Vagina (tissue), 2 donors: ENCODE measurements at regions of chr21 and their contacts with region 1.

Region 1: DNA sequence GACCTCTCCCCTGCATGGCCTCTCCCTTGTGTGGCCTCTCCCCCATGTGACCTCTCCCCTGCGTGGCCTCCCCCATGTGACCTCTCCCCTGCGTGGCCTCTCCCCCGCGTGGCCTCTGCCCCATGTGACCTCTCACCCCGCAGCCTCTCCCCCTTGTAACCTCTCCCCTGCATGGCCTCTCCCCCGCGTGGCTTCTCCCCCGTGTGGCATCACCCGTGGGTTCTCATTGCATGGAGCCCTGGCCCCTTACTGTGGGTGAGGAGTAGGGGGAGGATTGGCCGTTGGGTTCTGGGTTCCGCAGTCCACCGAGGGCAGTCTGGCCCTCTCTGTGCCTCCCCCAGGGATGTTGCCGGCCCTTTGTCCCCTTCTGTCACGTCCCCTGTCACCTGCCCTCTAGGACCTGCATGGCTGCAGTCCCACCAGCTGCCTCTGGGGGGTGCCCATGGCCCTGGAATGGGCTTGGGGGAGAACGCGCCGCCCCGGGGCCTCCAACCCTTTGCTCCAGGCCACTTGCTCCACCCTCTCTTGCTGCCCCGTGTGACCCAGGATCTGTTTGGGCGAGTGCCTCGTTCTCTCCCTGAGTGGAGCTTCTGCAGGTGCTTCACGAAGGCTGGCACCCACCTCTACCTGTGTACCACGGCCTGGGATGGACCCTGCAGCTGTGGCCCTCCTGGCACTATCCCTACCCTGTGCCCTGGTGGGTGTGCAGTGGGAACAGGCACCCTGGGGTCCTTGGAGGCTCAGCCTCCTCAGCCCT is 21.3 kb downstream of the RRP1 start:
- DNase-seq: no peak
- H3K4me3 ChIP-seq: peak overlapping the region in 1 of 2 donors; percentile 27
- H3K27ac ChIP-seq: peak overlapping the region; percentile 60
- H3K4me1 ChIP-seq: peaks cover 53% of the 10 kb centered on the region
- H3K27me3 ChIP-seq: no peaks in the 10 kb centered on the region
- CTCF ChIP-seq: peak; percentile 73 to 89 (median 87)
- POLR2A ChIP-seq: no peak

Region 2: GRCh38 chr21:43975495-43975993 is 164.9 kb after region 1 on chr21:
- intact Hi-C with region 1: loop called (anchors 5 kb)
- DNase-seq: no peak
- H3K4me3 ChIP-seq: no peak overlapping the region
- H3K27ac ChIP-seq: no peak overlapping the region
- H3K4me1 ChIP-seq: no peaks in the 10 kb centered on the region
- H3K27me3 ChIP-seq: no peaks in the 10 kb centered on the region
- CTCF ChIP-seq: peak; percentile 79 to 96 (median 89)
- POLR2A ChIP-seq: no peak

Region 3: GRCh38 chr21:44454747-44455523 is 644.3 kb after region 1 on chr21 and contains the start of gene LRRC3:
- intact Hi-C with region 1: no loop called
- DNase-seq: no peak
- H3K4me3 ChIP-seq: peak within 1 kb of the TSS; percentile 75 to 83
- H3K27ac ChIP-seq: no peak within 1 kb of the TSS
- H3K4me1 ChIP-seq: peaks cover 9% of the 10 kb centered on the region
- H3K27me3 ChIP-seq: no peaks in the 10 kb centered on the region
- CTCF ChIP-seq: no peak
- POLR2A ChIP-seq: no peak
- total RNA-seq, gene LRRC3: 2.5 TPM